Panc1 (cell line): ENCODE measurements at regions of chrX and their contacts with region 1.

Region 1: GRCh38 chrX:70826715-70827114 is 81.8 kb downstream of the TEX11 start:
- DNase-seq: no peak
- ATAC-seq: no peak
- H3K4me3 ChIP-seq: no peak overlapping the region
- H3K27ac ChIP-seq: no peak overlapping the region
- H3K4me1 ChIP-seq: no peaks in the 10 kb centered on the region
- H3K27me3 ChIP-seq: no peaks in the 10 kb centered on the region
- CTCF ChIP-seq: no peak

Region 2: DNA sequence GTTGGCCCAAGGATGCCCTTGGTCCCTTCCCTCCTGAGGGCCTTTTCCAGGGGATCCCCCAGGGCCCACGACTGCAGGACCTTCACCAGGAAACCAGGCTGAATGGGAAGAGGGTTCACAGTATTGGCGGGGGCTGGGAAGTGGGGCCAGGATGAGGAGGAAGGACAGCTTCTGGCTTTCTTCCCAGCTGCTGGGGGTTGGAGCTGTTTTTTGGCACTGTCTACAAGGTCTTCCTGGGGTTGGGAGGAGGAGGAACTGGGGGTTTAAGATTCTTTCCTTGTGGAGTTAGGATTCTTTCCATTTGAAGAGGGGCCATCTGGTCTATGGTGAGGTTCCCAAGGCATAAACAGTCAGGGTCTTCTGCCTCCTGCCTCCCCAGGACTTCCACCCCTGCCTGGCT is 472.0 kb before region 1 on chrX:
- CTCF ChIA-PET with region 1: no interaction called
- POLR2A ChIA-PET with region 1: no interaction called
- in situ Hi-C with region 1: no loop called
- intact Hi-C with region 1: no loop called
- DNase-seq: no peak
- ATAC-seq: no peak
- H3K4me3 ChIP-seq: no peak overlapping the region
- H3K27ac ChIP-seq: no peak overlapping the region
- H3K4me1 ChIP-seq: no peaks in the 10 kb centered on the region
- H3K27me3 ChIP-seq: no peaks in the 10 kb centered on the region
- CTCF ChIP-seq: no peak

Region 3: GRCh38 chrX:70901465-70901864 is 74.8 kb after region 1 on chrX:
- CTCF ChIA-PET with region 1: no interaction called
- POLR2A ChIA-PET with region 1: no interaction called
- in situ Hi-C with region 1: no loop called
- intact Hi-C with region 1: no loop called
- DNase-seq: no peak
- ATAC-seq: no peak
- H3K4me3 ChIP-seq: no peak overlapping the region
- H3K27ac ChIP-seq: no peak overlapping the region
- H3K4me1 ChIP-seq: no peaks in the 10 kb centered on the region
- H3K27me3 ChIP-seq: no peaks in the 10 kb centered on the region; the same call in 1 of the 2 replicates
- CTCF ChIP-seq: no peak

Region 4: GRCh38 chrX:70970482-70970995 is 143.8 kb after region 1 on chrX:
- CTCF ChIA-PET with region 1: interaction called, 3 read pairs
- POLR2A ChIA-PET with region 1: interaction called, 12 read pairs
- in situ Hi-C with region 1: no loop called
- intact Hi-C with region 1: no loop called
- DNase-seq: no peak
- ATAC-seq: no peak
- H3K4me3 ChIP-seq: no peak overlapping the region
- H3K27ac ChIP-seq: no peak overlapping the region
- H3K4me1 ChIP-seq: no peaks in the 10 kb centered on the region
- H3K27me3 ChIP-seq: peaks cover 3% of the 10 kb centered on the region
- CTCF ChIP-seq: peak; percentile 40; the same call in 1 of the 2 replicates